Activated CD4-positive, alpha-beta T cell treated with anti-CD3 and anti-CD28 coated beads for 36 hours (primary cell): ENCODE measurements at regions of chr17 and their contacts with region 1.

Region 1: GRCh38 chr17:59707114-59707970 is at the starts of genes PTRH2 and VMP1:
- DNase-seq: peak; percentile 97
- ATAC-seq: peak; percentile 99
- H3K4me3 Mint-ChIP-seq: peak within 1 kb of the TSS; percentile 92
- H3K27ac Mint-ChIP-seq: peak within 1 kb of the TSS; percentile 96
- H3K4me1 Mint-ChIP-seq: peaks cover 60% of the 10 kb centered on the region
- H3K27me3 Mint-ChIP-seq: no peaks in the 10 kb centered on the region
- total RNA-seq, gene PTRH2: 41.7 to 54.7 TPM
- total RNA-seq, gene VMP1: 378 to 402 TPM

Region 2: DNA sequence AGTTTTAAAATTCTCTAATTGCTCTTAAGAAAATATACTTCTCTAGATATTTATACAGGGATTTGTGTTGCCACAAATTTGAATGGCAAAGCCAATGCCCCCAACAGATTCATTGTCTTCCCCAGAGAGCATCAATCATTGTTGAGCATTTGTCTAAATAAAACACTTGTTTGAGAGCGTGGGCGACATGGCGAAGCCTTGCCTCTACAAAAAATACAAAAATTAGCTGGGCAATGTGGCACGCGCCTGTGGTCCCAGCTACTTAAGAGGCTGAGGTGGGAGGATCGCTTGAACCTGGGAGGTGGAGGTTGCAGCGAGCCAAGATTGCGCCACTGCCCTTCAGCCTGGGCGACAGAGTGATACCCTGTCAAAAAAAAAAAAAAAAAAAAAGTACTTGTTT is 1686.9 kb before region 1 on chr17:
- CTCF ChIA-PET with region 1: no interaction called
- POLR2A ChIA-PET with region 1: no interaction called
- intact Hi-C with region 1: no loop called
- DNase-seq: no peak
- ATAC-seq: no peak
- H3K4me3 Mint-ChIP-seq: no peak overlapping the region
- H3K27ac Mint-ChIP-seq: no peak overlapping the region
- H3K4me1 Mint-ChIP-seq: no peaks in the 10 kb centered on the region
- H3K27me3 Mint-ChIP-seq: peaks cover 17% of the 10 kb centered on the region

Region 3: GRCh38 chr17:58337600-58338453 is 1369.5 kb before region 1 on chr17:
- CTCF ChIA-PET with region 1: no interaction called
- POLR2A ChIA-PET with region 1: no interaction called
- intact Hi-C with region 1: loop called in 1 of 2 experiments (anchors 10 kb)
- DNase-seq: peak; percentile 97
- ATAC-seq: peak; percentile 57
- H3K4me3 Mint-ChIP-seq: peak overlapping the region; percentile 100
- H3K27ac Mint-ChIP-seq: peak overlapping the region; percentile 99
- H3K4me1 Mint-ChIP-seq: peaks cover 26% of the 10 kb centered on the region
- H3K27me3 Mint-ChIP-seq: no peaks in the 10 kb centered on the region

Region 4: DNA sequence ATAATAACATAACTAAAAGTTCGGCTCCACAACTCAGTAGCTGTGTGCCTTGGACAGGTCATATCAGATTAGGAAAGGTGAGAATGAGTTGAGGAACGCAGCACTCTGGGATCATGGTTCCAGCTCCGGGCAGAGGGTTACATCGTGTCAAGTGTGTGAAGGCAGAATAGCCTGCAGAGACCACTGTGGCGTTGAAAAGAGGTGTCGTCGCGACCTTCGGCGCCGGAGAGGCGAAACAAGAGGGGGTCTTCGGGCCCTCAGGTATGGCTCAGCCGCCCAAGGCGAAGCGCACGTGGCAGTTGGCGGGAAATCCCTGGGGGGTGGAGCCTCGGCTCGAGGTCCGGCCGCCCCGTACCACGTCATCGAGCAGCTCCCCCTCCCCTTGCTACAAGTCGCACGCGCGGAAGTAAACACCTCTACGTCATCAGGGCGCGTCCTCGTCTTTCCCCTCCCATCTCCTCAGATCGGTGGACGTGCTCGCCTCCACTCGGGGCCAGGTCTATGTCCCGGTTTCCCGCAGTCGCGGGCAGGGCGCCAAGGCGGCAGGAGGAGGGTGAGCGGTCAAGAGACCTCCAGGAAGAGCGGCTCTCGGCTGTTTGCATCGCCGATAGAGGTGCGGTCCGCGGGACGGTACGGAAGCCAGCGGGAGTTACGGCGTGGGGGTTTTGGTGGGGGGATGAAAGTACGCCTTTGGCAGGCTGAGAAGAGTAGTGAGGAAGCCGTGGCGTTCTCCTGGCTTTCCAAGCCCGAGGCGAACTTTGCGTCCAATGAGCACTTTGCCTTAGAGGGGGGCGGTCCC is 142.0 kb before region 1 on chr17 and contains the start of gene DHX40:
- CTCF ChIA-PET with region 1: no interaction called
- POLR2A ChIA-PET with region 1: interaction called, 6 read pairs
- intact Hi-C with region 1: loop called in 1 of 2 experiments (anchors 1 kb)
- DNase-seq: peak; percentile 98
- ATAC-seq: peak; percentile 89
- H3K4me3 Mint-ChIP-seq: peak within 1 kb of the TSS; percentile 99
- H3K27ac Mint-ChIP-seq: peak within 1 kb of the TSS; percentile 99
- H3K4me1 Mint-ChIP-seq: peaks cover 20% of the 10 kb centered on the region
- H3K27me3 Mint-ChIP-seq: no peaks in the 10 kb centered on the region
- total RNA-seq, gene DHX40: 22.9 to 24.1 TPM

Region 5: GRCh38 chr17:59601130-59601529 is 106.2 kb before region 1 on chr17:
- CTCF ChIA-PET with region 1: no interaction called
- POLR2A ChIA-PET with region 1: no interaction called
- intact Hi-C with region 1: no loop called
- DNase-seq: peak; percentile 43
- ATAC-seq: peak; percentile 99
- H3K4me3 Mint-ChIP-seq: no peak overlapping the region
- H3K27ac Mint-ChIP-seq: peak overlapping the region; percentile 34
- H3K4me1 Mint-ChIP-seq: peaks cover 11% of the 10 kb centered on the region
- H3K27me3 Mint-ChIP-seq: no peaks in the 10 kb centered on the region

Region 6: GRCh38 chr17:59786536-59787319 is 79.4 kb after region 1 on chr17:
- CTCF ChIA-PET with region 1: no interaction called
- POLR2A ChIA-PET with region 1: interaction called, 8 read pairs
- intact Hi-C with region 1: loop called in 1 of 2 experiments (anchors 1 kb)
- DNase-seq: peak; percentile 86
- ATAC-seq: peak; percentile 84
- H3K4me3 Mint-ChIP-seq: peak overlapping the region; percentile 71
- H3K27ac Mint-ChIP-seq: peak overlapping the region; percentile 96
- H3K4me1 Mint-ChIP-seq: peaks cover 68% of the 10 kb centered on the region
- H3K27me3 Mint-ChIP-seq: no peaks in the 10 kb centered on the region

Region 7: DNA sequence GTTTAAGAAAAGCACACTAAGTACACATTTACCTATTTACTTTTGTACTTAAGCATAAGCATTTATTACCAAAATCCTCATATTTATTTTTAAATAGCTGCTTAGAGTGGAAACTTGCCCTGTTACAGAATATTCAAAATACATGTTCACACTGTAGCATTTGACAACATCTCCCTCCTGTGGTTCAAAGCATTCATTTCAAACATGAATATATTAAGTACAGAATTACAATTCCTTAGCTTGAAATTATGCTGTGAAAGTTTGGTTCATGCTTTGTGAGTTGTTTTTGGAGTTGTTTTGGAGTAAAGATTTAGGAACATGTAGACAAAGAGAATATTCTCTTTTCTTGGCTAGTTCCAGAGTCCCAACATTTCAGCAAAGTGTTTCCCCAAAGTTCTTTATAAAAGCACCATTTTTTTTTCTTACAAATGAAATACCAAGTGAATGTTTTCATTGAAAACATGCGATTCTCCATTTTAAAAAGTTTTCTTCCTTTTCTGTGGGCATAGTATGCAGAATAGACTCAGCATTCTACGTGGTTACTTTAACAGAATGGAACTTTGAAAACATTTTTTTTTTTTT is 152.2 kb after region 1 on chr17:
- CTCF ChIA-PET with region 1: interaction called, 12 read pairs
- POLR2A ChIA-PET with region 1: interaction called, 3 read pairs
- intact Hi-C with region 1: no loop called
- DNase-seq: no peak
- ATAC-seq: peak; percentile 60
- H3K4me3 Mint-ChIP-seq: no peak overlapping the region
- H3K27ac Mint-ChIP-seq: peak overlapping the region; percentile 37
- H3K4me1 Mint-ChIP-seq: peaks cover 20% of the 10 kb centered on the region
- H3K27me3 Mint-ChIP-seq: no peaks in the 10 kb centered on the region

Region 8: DNA sequence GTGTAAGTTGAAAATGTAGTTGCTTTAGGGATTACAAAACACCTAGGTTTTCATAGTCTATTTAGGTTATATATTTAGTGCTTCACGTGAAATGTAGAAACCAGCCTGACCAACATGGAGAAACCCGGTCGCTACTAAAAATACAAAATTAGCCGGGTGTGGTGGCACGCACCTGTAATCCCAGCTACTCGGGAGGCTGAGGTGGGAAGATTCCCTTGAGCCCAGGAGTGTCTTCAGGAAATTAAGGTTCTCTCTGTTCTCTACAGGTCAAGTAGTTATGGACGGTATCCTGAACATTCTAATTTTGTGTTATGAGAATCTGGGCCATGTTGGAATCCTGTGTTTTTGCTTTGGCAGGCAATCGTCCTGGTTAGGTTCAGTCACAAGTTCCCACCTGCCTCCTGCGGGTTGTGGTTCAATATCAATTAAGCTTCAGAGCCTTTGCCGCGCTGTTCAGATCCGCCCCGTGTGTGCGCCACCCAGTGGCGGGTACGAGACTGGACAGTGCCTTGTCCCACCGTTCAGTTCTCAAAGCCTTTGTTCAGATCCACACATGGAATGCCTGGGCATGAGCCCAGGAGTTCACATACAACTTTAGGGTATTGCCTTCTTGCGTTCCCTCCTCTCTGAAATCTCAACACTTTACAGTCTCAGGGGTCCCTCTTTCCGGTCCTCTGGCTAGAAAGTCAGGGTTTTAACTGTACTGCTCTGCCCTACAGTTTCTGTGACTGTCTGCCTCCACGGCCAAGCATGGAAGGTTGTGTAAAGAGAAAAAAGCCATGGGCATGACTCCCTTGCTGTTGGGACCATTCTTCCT is 329.7 kb after region 1 on chr17:
- CTCF ChIA-PET with region 1: interaction called, 7 read pairs
- POLR2A ChIA-PET with region 1: no interaction called
- intact Hi-C with region 1: loop called (anchors 10 kb)
- DNase-seq: peak; percentile 85
- ATAC-seq: peak; percentile 98
- H3K4me3 Mint-ChIP-seq: no peak overlapping the region
- H3K27ac Mint-ChIP-seq: no peak overlapping the region
- H3K4me1 Mint-ChIP-seq: peaks cover 8% of the 10 kb centered on the region
- H3K27me3 Mint-ChIP-seq: peaks cover 14% of the 10 kb centered on the region

Region 9: GRCh38 chr17:60525328-60525684 is 818.0 kb after region 1 on chr17:
- CTCF ChIA-PET with region 1: no interaction called
- POLR2A ChIA-PET with region 1: no interaction called
- intact Hi-C with region 1: no loop called
- DNase-seq: no peak
- ATAC-seq: no peak
- H3K4me3 Mint-ChIP-seq: peak overlapping the region; percentile 96
- H3K27ac Mint-ChIP-seq: peak overlapping the region; percentile 97
- H3K4me1 Mint-ChIP-seq: peaks cover 30% of the 10 kb centered on the region
- H3K27me3 Mint-ChIP-seq: no peaks in the 10 kb centered on the region

Region 10: DNA sequence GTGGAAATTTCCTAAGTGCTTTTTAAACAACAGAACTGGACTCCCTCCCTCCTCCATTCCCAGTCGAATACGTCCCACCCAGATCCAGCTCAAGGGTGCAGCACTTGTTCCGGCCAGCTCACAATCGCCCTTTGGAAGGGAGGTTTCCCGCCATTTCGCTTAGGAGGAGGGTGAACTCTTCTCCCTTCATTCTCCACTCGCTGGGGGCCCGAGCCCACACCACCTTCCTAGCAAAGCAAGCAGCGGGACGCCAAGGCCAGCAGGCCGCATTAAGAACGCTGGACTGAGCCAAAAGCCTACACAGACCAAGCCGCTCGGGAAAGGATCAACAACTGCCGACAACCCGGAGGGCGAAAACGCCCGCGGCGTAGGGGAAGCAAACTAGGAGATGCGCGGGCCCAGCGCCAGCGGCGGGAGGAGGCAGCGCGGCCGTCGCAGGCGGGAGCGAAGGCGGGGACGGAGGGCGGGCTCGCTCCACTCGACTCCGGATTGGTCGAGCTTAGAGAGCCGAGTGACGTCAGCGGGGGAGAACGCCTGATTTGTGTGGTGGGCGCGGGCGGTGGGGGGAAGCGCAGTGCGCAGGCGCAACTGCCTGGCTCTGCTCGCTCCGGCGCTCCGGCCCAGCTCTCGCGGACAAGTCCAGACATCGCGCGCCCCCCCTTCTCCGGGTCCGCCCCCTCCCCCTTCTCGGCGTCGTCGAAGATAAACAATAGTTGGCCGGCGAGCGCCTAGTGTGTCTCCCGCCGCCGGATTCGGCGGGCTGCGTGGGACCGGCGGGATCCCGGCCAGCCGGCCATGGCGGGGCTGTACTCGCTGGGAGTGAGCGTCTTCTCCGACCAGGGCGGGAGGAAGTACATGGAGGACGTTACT is 892.5 kb after region 1 on chr17 and contains the start of gene PPM1D:
- CTCF ChIA-PET with region 1: no interaction called
- POLR2A ChIA-PET with region 1: no interaction called
- intact Hi-C with region 1: loop called in 1 of 2 experiments (anchors 2 kb)
- DNase-seq: peak; percentile 99
- ATAC-seq: peak; percentile 94
- H3K4me3 Mint-ChIP-seq: peak within 1 kb of the TSS; percentile 95
- H3K27ac Mint-ChIP-seq: peak within 1 kb of the TSS; percentile 97
- H3K4me1 Mint-ChIP-seq: peaks cover 31% of the 10 kb centered on the region
- H3K27me3 Mint-ChIP-seq: no peaks in the 10 kb centered on the region
- total RNA-seq, gene PPM1D: 9.3 to 9.7 TPM